ENCODE measurements at regions of chr11 and their contacts with region 1.

Region 1: GRCh38 chr11:17504330-17505107 is 27.9 kb upstream of the ABCC8 start:
- DNase-seq: peak; percentile 80 to 95 (median 88)
- H3K4me3 ChIP-seq: no peak overlapping the region
- H3K27ac ChIP-seq: no peak overlapping the region
- H3K4me1 ChIP-seq: peaks cover 0 to 14% of the 10 kb centered on the region in 2 donors
- H3K27me3 ChIP-seq: no peaks in the 10 kb centered on the region
- CTCF ChIP-seq: peak; percentile 85 to 96 (median 94)
- POLR2A ChIP-seq: no peak

Region 2: GRCh38 chr11:17384002-17384511 is 120.5 kb before region 1 on chr11:
- intact Hi-C with region 1: loop called (anchors 2 to 5 kb)
- DNase-seq: peak; percentile 77 to 89 (median 83)
- H3K4me3 ChIP-seq: no peak overlapping the region
- H3K27ac ChIP-seq: no peak overlapping the region
- H3K4me1 ChIP-seq: no peaks in the 10 kb centered on the region
- H3K27me3 ChIP-seq: no peaks in the 10 kb centered on the region
- CTCF ChIP-seq: peak; percentile 87 to 97 (median 92)
- POLR2A ChIP-seq: no peak

Region 3: GRCh38 chr11:17389211-17389956 is 115.1 kb before region 1 on chr11:
- intact Hi-C with region 1: loop called (anchors 2 to 5 kb)
- DNase-seq: peak; percentile 59 to 82 (median 72)
- H3K4me3 ChIP-seq: peak overlapping the region in 2 of 4 donors; percentile 36 to 59
- H3K27ac ChIP-seq: peak overlapping the region in 1 of 5 donors; percentile 35
- H3K4me1 ChIP-seq: peaks cover 3 to 4% of the 10 kb centered on the region in 2 donors
- H3K27me3 ChIP-seq: no peaks in the 10 kb centered on the region
- CTCF ChIP-seq: peak in 4 of 6 experiments; percentile 23 to 73 (median 66)
- POLR2A ChIP-seq: no peak

Region 4: GRCh38 chr11:17432002-17432401 is 72.5 kb before region 1 on chr11:
- intact Hi-C with region 1: no loop called
- DNase-seq: no peak
- H3K4me3 ChIP-seq: no peak overlapping the region
- H3K27ac ChIP-seq: no peak overlapping the region
- H3K4me1 ChIP-seq: no peaks in the 10 kb centered on the region
- H3K27me3 ChIP-seq: no peaks in the 10 kb centered on the region
- CTCF ChIP-seq: no peak
- POLR2A ChIP-seq: no peak

Region 5: DNA sequence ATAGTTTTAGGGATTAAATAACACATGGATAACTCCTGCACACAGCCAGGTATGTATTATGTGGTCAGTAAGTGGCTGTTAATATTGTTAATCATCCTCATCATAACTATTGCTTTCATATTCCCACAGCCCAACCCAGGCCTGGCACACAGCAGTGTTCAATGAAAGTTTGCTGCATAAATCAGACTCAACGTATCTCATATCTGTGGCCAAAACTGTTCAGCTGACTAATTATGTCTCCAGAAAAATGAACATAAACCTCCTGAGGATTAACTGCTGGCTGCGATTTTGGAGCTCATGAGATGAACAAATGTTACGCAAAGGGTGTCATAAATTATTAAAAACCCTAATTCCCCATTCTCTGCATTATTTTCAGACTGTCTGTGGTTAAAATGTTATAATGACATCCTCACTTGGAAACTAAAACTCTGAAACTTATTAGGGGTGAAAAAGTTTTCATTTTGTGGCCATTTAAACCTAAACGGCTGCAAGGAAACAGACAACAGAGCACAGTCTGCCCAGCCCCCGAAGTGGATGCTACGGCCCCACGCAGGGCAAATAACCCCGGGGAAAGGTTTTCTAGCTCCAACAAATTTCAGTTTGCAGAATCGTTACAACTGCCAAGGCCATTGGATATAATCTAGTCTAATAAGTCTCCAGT is 45.2 kb before region 1 on chr11:
- intact Hi-C with region 1: no loop called
- DNase-seq: no peak
- H3K4me3 ChIP-seq: no peak overlapping the region
- H3K27ac ChIP-seq: no peak overlapping the region
- H3K4me1 ChIP-seq: no peaks in the 10 kb centered on the region
- H3K27me3 ChIP-seq: no peaks in the 10 kb centered on the region
- CTCF ChIP-seq: no peak
- POLR2A ChIP-seq: no peak

Region 6: GRCh38 chr11:18056561-18057181 is 552.2 kb after region 1 on chr11:
- intact Hi-C with region 1: no loop called
- DNase-seq: no peak
- H3K4me3 ChIP-seq: no peak overlapping the region
- H3K27ac ChIP-seq: no peak overlapping the region
- H3K4me1 ChIP-seq: no peaks in the 10 kb centered on the region
- H3K27me3 ChIP-seq: no peaks in the 10 kb centered on the region
- CTCF ChIP-seq: no peak
- POLR2A ChIP-seq: no peak

Measured in adrenal gland (tissue), 19 donors.